AG04449 (cell line): ENCODE measurements at regions of chr1 and their contacts with region 1.

Region 1: GRCh38 chr1:115112496-115113375 is 23.4 kb upstream of the TSPAN2 start:
- DNase-seq: no peak
- H3K4me3 ChIP-seq: no peak overlapping the region
- CTCF ChIP-seq: peak; percentile 78

Region 2: GRCh38 chr1:114979278-114979891 is 133.4 kb before region 1 on chr1:
- CTCF ChIA-PET with region 1: interaction called, 72 read pairs
- POLR2A ChIA-PET with region 1: no interaction called
- DNase-seq: peak; percentile 17
- H3K4me3 ChIP-seq: no peak overlapping the region
- CTCF ChIP-seq: peak; percentile 64

Region 3: DNA sequence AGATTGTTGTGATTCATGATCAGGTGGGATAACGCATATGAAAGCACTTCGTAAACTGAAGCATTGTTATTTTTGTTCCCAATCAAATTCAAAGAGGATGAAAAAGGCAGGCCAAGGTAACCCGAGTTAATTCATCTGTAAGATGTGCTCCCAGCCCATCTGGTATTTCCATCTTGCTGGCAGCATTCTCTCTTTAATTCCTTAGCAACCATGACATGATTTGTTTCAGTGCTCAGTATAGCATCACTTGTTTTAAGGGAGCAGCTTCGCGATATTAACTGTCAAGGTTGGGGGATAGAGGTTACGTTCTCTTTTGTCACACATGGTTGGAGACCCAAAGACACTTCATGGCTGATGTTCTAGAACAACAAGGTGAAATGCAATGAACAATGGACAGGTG is 29.8 kb before region 1 on chr1:
- CTCF ChIA-PET with region 1: interaction called, 21 read pairs
- POLR2A ChIA-PET with region 1: no interaction called
- DNase-seq: no peak
- H3K4me3 ChIP-seq: no peak overlapping the region
- CTCF ChIP-seq: no peak

Region 4: GRCh38 chr1:115089420-115090185 is 23.1 kb before region 1 on chr1 and contains the start of gene TSPAN2:
- CTCF ChIA-PET with region 1: interaction called, 21 read pairs
- POLR2A ChIA-PET with region 1: no interaction called
- DNase-seq: no peak
- H3K4me3 ChIP-seq: peak within 1 kb of the TSS; percentile 64
- CTCF ChIP-seq: peak; percentile 48

Region 5: DNA sequence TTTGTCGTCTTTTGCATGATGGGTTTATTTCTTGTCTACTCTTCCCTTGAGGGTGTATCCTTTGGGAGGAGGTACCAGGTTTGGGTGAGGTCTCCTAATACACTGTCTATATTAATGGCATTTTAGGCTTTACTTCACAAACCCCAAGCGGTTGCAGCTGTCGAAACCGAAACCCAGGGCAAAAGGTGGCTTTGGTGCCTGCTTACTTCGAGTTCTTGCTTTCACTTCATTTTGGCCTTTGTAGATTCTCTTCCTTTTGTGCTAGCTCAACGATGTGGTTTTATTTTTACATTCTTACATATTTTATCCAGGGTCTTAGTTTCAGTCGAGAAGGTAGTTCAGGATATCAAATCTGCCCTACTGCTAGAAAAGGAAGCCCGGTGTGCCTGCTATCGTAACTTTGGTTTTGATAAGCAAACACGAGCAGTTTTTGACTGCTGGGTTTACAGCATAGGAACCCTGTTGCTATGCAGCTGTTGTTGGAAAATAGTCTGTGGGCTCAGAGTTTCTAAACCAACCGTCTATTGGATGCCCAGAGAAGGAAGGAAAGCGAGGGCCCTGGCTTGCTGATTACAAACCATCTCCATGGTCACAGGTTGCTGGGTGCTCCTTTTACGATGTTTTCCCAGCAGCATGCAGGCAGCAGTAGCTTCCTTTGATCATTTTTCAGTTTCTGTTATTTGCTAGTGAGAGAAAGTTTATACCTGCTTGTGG is 13.6 kb before region 1 on chr1:
- CTCF ChIA-PET with region 1: interaction called, 33 read pairs
- POLR2A ChIA-PET with region 1: no interaction called
- DNase-seq: no peak
- H3K4me3 ChIP-seq: no peak overlapping the region
- CTCF ChIP-seq: no peak